Heart left ventricle (tissue), 16 donors: ENCODE measurements at regions of chr5 and their contacts with region 1.

Region 1: GRCh38 chr5:151107738-151108508 is 27.1 kb upstream of the TNIP1 start:
- DNase-seq: peak in 4 of 5 donors; percentile 62 to 81 (median 70)
- ATAC-seq: peak; percentile 73 to 90 (median 80)
- H3K4me3 ChIP-seq: no peak overlapping the region
- H3K27ac ChIP-seq: peak overlapping the region in 10 of 12 donors; percentile 49 to 93 (median 76)
- H3K4me1 ChIP-seq: peaks cover 2 to 55% (median 32%) of the 10 kb centered on the region in 12 donors
- H3K27me3 ChIP-seq: no peaks in the 10 kb centered on the region
- CTCF ChIP-seq: peak in 3 of 12 donors; percentile 9 to 18 (median 13)
- POLR2A ChIP-seq: no peak

Region 2: GRCh38 chr5:151020304-151021110 is 87.4 kb before region 1 on chr5 and contains the start of gene GPX3:
- intact Hi-C with region 1: no loop called
- DNase-seq: peak; percentile 95 to 97 (median 97)
- ATAC-seq: peak; percentile 81 to 92 (median 85)
- H3K4me3 ChIP-seq: peak within 1 kb of the TSS; percentile 71 to 97 (median 86)
- H3K27ac ChIP-seq: peak within 1 kb of the TSS; percentile 88 to 98 (median 93)
- H3K4me1 ChIP-seq: peaks cover 14 to 82% (median 53%) of the 10 kb centered on the region in 12 donors
- H3K27me3 ChIP-seq: no peaks in the 10 kb centered on the region
- CTCF ChIP-seq: no peak
- POLR2A ChIP-seq: peak; percentile 97 to 100
- total RNA-seq, gene GPX3: 416 to 1,563 (median 738) TPM

Region 3: GRCh38 chr5:151063142-151063949 is 44.6 kb before region 1 on chr5:
- intact Hi-C with region 1: loop called in 5 of 10 experiments (anchors 5 kb)
- DNase-seq: peak in 4 of 5 donors; percentile 55 to 73 (median 57)
- ATAC-seq: peak; percentile 75 to 79 (median 76)
- H3K4me3 ChIP-seq: peak overlapping the region in 1 of 12 donors; percentile 12
- H3K27ac ChIP-seq: peak overlapping the region; percentile 60 to 97 (median 86)
- H3K4me1 ChIP-seq: peaks cover 15 to 99% (median 82%) of the 10 kb centered on the region in 12 donors
- H3K27me3 ChIP-seq: no peaks in the 10 kb centered on the region
- CTCF ChIP-seq: peak in 1 of 12 donors; percentile 12
- POLR2A ChIP-seq: no peak

Region 4: GRCh38 chr5:151068433-151069197 is 39.3 kb before region 1 on chr5:
- intact Hi-C with region 1: loop called in 6 of 10 experiments (anchors 5 kb)
- DNase-seq: peak in 2 of 5 donors; percentile 29 to 42
- ATAC-seq: peak; percentile 38 to 62 (median 57)
- H3K4me3 ChIP-seq: no peak overlapping the region
- H3K27ac ChIP-seq: peak overlapping the region in 11 of 12 donors; percentile 61 to 89 (median 75)
- H3K4me1 ChIP-seq: peaks cover 7 to 97% (median 83%) of the 10 kb centered on the region in 12 donors
- H3K27me3 ChIP-seq: no peaks in the 10 kb centered on the region
- CTCF ChIP-seq: no peak
- POLR2A ChIP-seq: no peak